Activated CD4-positive, alpha-beta memory T cell treated with anti-CD3 and anti-CD28 coated beads for 36 hours (primary cell): ENCODE measurements at regions of chr21 and their contacts with region 1.

Region 1: DNA sequence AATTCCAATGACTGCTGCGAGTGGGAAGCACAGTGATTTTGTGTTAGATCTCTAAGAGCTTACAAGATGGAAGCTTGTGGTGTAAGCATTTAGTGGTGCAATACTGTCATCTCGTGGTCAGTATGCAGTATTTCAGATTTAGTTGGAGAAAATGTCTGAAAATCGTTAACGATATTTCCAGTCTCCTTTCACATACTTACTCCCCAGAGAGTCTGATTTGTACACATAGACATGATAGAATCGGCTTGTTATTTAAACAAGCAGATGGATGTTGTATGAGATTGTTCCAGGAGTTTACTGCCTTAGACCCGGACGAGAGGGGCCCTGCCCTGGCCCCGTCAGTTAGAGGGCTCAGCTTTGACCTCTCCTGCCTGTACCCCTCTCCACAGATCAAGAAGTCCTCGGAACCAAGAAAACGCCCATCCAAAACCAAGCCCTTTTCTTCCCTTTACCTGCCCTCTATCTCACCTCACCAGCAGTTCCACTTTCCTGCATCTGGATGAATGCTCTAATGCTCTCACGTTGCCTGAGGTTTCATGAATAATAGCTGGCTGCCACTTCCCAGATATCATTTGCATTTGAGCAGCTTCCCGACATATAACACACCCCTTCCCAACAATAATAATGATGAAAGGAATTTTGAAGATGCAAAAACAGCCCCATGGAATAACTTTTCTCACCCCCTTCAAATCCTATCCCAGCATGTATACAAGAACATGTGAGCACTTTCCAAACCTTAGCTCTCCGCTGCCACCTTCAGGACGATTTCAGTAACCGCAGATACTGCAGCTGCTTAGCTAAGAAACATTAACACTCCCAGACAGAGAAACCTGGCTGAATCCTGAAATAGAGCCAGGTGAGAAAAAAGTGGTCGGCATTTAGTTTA is 247.3 kb downstream of the LTN1 start:
- DNase-seq: peak; percentile 80
- H3K4me3 Mint-ChIP-seq: no peak overlapping the region
- H3K27ac Mint-ChIP-seq: no peak overlapping the region
- H3K4me1 Mint-ChIP-seq: no peaks in the 10 kb centered on the region
- H3K27me3 Mint-ChIP-seq: no peaks in the 10 kb centered on the region

Region 2: DNA sequence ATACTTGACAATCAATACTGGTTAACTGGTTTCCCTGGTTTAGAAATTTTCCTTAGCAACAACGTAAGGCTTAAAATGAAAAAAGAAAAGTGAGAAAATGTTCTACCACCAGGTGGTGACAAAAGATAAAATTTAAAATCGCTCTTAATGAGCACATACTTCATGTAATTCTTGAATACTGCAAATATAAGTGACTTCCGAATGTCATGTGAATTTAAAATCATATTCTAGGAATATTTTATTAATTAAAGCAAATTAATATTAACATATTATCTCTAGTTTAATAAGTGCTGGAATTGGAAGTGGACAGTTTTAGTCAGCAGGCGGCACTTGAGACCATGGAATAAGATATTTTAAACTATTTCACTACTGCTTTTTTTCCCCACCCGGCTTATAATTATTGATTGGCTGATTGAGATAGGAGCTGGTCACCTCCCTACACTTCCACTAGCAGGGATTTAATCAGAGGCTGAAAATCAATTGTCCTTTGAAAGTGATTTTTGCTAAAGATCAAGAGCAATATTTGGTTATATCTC is 1895.2 kb before region 1 on chr21:
- CTCF ChIA-PET with region 1: interaction called, 26 read pairs
- POLR2A ChIA-PET with region 1: no interaction called
- intact Hi-C with region 1: loop called (anchors 1 kb)
- DNase-seq: no peak
- H3K4me3 Mint-ChIP-seq: no peak overlapping the region
- H3K27ac Mint-ChIP-seq: no peak overlapping the region
- H3K4me1 Mint-ChIP-seq: peaks cover 19% of the 10 kb centered on the region
- H3K27me3 Mint-ChIP-seq: peaks cover 37% of the 10 kb centered on the region

Region 3: DNA sequence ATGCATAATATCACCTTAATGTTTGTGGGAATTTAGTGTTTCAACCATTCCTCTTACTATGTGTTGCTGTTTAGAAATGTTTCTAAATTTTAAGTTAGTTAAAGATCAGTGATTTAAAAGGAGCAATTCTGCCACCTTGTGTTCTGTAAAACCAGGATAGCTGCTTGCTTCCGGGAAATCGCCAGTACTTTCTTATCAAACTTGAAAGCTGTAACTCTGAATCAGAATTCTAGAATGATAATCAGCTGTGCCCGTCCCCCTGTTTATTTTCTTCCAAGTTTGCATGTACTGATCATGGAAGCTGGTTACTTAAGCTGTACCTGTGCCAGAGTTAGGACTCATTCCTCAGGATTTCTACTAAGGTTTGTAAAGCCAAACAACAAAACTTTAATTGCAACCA is 409.1 kb before region 1 on chr21:
- CTCF ChIA-PET with region 1: interaction called, 5 read pairs
- POLR2A ChIA-PET with region 1: no interaction called
- intact Hi-C with region 1: loop called (anchors 2 kb)
- DNase-seq: no peak
- H3K4me3 Mint-ChIP-seq: no peak overlapping the region
- H3K27ac Mint-ChIP-seq: no peak overlapping the region
- H3K4me1 Mint-ChIP-seq: no peaks in the 10 kb centered on the region
- H3K27me3 Mint-ChIP-seq: no peaks in the 10 kb centered on the region

Region 4: GRCh38 chr21:28543975-28544374 is 201.4 kb before region 1 on chr21:
- CTCF ChIA-PET with region 1: no interaction called
- POLR2A ChIA-PET with region 1: no interaction called
- intact Hi-C with region 1: no loop called
- DNase-seq: no peak
- H3K4me3 Mint-ChIP-seq: no peak overlapping the region
- H3K27ac Mint-ChIP-seq: no peak overlapping the region
- H3K4me1 Mint-ChIP-seq: no peaks in the 10 kb centered on the region
- H3K27me3 Mint-ChIP-seq: no peaks in the 10 kb centered on the region

Region 5: DNA sequence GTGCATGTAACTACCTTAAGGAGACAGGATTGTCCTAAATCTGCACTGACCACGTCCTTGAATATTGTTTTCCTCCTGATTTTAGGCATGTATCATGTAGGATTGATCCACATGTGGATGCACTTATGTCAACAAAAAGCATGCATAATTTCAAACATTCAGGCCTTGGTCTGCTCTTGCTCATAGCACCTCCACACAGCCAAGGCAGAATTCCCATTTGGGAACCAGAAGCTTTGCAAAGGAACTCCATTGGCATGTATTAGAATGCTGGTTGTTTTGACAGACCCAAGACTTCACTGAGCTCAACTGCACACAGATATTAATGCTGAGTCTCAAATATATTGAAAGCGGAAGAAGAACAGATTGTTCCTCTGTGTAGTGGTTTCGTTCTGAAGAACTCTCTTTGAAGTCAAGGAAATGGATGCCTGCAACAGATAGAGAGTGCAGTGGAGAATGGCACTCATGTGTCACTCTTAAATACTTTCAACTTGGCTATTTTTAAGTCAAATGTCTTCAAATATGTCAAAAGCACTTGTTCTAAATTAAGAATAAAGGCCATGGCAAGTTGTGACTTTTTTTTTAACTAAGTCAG is 140.3 kb before region 1 on chr21:
- CTCF ChIA-PET with region 1: interaction called, 4 read pairs
- POLR2A ChIA-PET with region 1: no interaction called
- intact Hi-C with region 1: loop called (anchors 1 kb)
- DNase-seq: no peak
- H3K4me3 Mint-ChIP-seq: no peak overlapping the region
- H3K27ac Mint-ChIP-seq: no peak overlapping the region
- H3K4me1 Mint-ChIP-seq: peaks cover 23% of the 10 kb centered on the region
- H3K27me3 Mint-ChIP-seq: no peaks in the 10 kb centered on the region

Region 6: DNA sequence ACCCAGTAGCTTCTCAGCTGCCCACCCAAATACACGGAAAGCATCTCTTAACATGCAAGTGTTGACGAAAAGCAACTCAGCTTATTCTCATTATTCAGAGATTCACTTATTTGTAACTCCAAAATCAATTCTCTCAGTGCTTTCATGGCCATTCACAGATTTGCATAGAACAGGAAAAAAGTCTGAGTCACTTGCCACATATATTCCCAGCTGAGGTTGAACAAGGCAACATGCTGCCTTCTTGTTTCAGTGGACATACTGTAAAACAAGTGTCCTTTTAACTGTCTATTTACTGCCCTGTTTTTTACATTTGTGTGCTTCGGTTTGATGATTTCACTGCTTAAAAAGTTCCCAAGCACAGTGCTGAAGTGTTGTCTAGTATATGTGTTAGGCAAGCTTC is 25.7 kb before region 1 on chr21:
- CTCF ChIA-PET with region 1: interaction called, 19 read pairs
- POLR2A ChIA-PET with region 1: no interaction called
- intact Hi-C with region 1: no loop called
- DNase-seq: no peak
- H3K4me3 Mint-ChIP-seq: no peak overlapping the region
- H3K27ac Mint-ChIP-seq: no peak overlapping the region
- H3K4me1 Mint-ChIP-seq: no peaks in the 10 kb centered on the region
- H3K27me3 Mint-ChIP-seq: no peaks in the 10 kb centered on the region

Region 7: DNA sequence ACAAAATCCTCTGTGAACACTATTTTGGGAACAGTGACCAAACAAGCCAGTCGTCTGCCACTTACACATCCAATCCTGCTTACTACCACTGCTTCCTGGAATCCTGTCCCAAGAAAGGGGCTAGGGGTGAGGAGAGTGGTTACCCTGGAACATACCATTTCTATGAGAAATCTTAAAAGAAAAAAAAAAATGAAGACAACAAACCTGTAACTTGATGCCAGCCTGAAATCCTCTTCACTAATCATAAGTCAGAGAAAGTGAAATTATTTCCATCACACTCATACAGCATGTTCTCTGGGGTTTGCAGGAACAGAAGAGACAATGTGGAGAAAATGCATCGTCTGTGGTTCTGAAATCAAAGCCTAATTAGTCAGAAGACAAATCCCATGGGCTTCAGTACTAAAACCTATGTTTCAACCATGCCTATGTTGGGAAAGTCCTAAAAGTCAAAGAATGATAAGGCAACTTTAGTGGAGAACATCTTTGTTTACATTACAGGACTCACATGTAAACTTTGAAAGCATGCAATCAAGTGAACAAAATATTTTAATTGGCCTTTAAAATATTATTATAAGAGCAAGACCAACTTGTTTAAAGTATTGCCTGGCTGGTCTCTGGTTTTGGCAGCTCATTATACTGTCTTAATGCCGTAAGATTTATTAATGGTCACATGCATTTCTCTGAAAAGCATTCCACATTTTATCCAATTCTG is 26.6 kb after region 1 on chr21:
- CTCF ChIA-PET with region 1: interaction called, 40 read pairs
- POLR2A ChIA-PET with region 1: no interaction called
- intact Hi-C with region 1: no loop called
- DNase-seq: no peak
- H3K4me3 Mint-ChIP-seq: peak overlapping the region; percentile 23
- H3K27ac Mint-ChIP-seq: peak overlapping the region; percentile 18
- H3K4me1 Mint-ChIP-seq: peaks cover 66% of the 10 kb centered on the region
- H3K27me3 Mint-ChIP-seq: no peaks in the 10 kb centered on the region

Region 8: DNA sequence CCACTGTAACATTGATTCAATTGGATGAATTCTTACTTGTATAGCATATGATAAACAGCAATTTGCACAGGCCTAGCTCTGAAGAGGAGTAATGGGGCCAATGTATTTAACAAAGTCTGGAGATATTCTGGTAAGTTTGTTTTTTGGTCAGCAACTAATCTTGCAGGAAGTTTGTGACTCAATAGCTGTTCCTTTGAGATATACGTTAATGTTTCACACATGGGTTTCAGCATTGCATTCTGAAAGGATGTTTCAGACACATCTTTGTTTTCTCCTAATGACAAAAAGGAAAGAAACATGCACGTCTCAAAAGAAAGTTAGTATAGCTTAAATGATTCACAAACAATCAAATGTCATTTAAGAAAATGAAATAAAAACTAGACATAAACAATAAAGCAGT is 198.3 kb after region 1 on chr21:
- CTCF ChIA-PET with region 1: interaction called, 29 read pairs
- POLR2A ChIA-PET with region 1: no interaction called
- intact Hi-C with region 1: loop called (anchors 1 kb)
- DNase-seq: no peak
- H3K4me3 Mint-ChIP-seq: no peak overlapping the region
- H3K27ac Mint-ChIP-seq: peak overlapping the region; percentile 28
- H3K4me1 Mint-ChIP-seq: peaks cover 7% of the 10 kb centered on the region
- H3K27me3 Mint-ChIP-seq: no peaks in the 10 kb centered on the region